Left ventricle myocardium superior (tissue), 1 donor: ENCODE measurements at regions of chr11 and their contacts with region 1.

Region 1: GRCh38 chr11:7571640-7572000 is 57.8 kb downstream of the PPFIBP2 start:
- DNase-seq: peak; percentile 67
- ATAC-seq: peak; percentile 75

Region 2: DNA sequence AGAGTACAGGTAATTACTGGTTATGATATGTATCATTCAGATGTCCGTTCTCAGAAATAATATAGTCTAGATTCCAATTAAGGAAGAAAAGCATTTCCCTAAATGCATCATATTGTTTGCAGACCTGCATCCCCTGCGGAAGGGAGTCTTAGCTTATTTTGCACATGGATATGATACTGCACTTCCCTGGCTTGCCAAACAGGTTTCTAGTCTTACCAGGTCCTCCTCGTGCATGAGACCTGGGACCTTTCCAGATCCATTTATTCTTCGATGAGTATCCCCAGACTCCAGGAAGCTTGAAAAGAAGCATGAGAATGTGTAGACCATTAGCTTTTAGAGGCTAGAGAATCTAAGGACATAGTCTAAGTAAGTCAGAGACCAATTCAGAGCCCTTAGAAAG is 71.1 kb after region 1 on chr11:
- intact Hi-C with region 1: no loop called
- DNase-seq: no peak
- ATAC-seq: no peak

Region 3: GRCh38 chr11:7657306-7658025 is 85.8 kb after region 1 on chr11:
- intact Hi-C with region 1: loop called (anchors 5 kb)
- DNase-seq: peak; percentile 64
- ATAC-seq: peak; percentile 91

Region 4: DNA sequence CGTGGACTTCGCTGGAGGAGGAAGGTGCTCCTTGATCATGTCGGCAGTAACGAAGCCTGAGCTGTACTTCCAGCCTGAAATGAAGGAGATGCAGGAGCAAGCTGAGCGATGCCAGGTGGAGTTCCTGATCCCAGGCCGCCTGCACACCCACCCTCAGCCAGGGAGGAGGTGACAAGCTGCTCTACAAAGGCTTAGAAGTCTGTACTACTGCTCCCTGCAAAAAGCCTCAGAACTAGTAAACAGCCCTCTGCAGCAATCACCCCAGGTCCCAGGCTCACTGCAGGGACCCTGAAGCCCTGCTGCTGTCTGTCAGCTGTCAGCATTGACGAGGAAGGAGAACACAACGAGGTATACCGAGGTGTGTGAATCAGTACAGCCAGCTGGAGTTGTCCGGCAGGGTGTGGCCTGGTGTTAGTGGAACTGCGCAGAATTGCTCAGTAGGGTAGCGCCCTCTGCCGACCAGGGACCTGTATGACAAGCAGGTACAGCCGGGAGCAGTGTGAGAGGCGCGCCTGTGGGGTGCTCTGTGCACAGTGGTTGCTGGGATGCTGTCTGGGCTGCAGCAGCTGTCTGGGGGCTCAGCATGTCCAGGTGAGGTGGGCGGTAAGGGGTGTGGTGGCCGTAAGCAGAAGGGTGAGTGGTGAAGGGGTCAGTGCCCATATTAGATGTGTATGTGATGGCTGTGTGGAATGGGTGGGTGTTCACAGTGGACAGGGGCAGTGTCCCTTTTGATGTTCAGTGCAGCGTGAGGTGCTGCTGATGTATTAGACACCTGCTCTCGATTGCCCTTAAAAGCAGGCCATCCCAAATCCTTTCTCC is 94.1 kb after region 1 on chr11:
- intact Hi-C with region 1: loop called (anchors 5 kb)
- DNase-seq: peak; percentile 80
- ATAC-seq: peak; percentile 94

Region 5: GRCh38 chr11:7892840-7893254 is 321.2 kb after region 1 on chr11:
- intact Hi-C with region 1: no loop called
- DNase-seq: no peak
- ATAC-seq: peak; percentile 57